ENCODE measurements at regions of chr19 and their contacts with region 1.

Region 1: DNA sequence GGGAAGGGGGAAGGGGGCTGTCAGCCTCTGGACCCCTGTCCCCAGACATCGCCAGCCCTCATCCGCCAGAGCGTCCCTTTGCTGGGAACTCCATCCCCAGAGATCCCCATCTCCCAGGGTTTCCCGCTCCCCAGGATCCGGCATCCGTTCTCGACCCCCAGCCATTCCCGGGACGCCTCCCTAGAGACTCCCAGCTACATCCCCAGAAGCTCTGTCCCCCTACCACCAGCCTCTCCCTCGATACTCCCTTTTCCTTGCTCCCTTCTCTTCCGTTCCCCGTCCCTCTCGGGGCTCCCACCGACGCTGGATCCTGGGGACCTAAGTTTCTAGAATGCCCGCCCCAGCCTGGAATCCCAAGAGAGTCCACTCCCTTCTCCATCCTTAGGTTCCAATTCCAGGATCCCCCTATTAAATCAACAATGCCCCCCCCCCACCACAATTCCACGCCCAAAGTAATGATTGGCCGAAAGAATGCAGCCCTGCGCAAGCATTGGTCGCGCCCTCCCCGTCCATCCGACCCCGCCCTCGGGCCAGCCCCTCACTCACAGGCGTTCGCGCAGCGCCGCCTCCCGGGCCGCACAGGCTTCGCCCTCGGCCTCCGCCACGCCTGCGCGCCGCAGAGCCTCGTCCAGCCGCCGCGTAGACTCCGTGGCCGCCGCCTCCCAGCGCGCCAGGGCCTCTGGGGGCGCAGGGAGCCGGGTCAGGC is 3.2 kb downstream of the CCDC194 start:
- DNase-seq: peak; percentile 89
- H3K4me3 ChIP-seq: peak overlapping the region; percentile 35
- H3K27ac ChIP-seq: no peak overlapping the region
- H3K4me1 ChIP-seq: peaks cover 6% of the 10 kb centered on the region
- H3K27me3 ChIP-seq: peaks cover 12% of the 10 kb centered on the region
- CTCF ChIP-seq: peak; percentile 61

Region 2: GRCh38 chr19:17292286-17293097 is 98.3 kb before region 1 on chr19:
- intact Hi-C with region 1: loop called (anchors 5 kb)
- DNase-seq: peak; percentile 87
- H3K4me3 ChIP-seq: peak overlapping the region; percentile 63
- H3K27ac ChIP-seq: peak overlapping the region; percentile 54
- H3K4me1 ChIP-seq: no peaks in the 10 kb centered on the region
- H3K27me3 ChIP-seq: no peaks in the 10 kb centered on the region
- CTCF ChIP-seq: peak; percentile 70

Region 3: DNA sequence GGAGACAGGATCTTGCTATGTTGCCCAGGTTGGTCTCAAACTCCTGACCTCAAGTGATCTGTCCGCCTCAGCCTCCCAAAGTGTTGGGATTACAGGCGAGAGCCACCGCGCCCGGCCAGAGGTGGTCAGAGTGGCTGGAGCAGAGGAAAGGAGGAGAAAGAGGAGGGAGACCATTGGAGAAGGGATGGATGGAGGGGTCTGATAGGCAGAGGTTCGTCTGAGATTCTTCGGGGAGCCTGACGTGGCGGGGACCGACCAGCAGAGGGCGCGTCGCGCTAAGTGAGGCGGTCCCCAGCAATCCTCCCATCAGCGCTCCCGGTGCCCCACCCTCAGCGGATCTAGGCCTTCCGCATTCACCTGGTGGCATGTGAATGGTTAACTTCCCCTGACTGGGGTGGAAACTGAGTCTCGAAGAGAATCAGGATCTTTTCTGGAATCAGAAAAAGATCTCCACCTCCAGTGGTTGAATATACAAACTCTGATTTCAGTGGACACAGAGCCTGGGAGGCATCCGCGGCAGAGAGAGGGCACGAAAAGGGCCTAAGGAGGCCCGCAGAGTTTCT is 44.6 kb before region 1 on chr19:
- intact Hi-C with region 1: loop called (anchors 2 kb)
- DNase-seq: peak; percentile 80
- H3K4me3 ChIP-seq: no peak overlapping the region
- H3K27ac ChIP-seq: no peak overlapping the region
- H3K4me1 ChIP-seq: no peaks in the 10 kb centered on the region
- H3K27me3 ChIP-seq: no peaks in the 10 kb centered on the region
- CTCF ChIP-seq: peak; percentile 95

Region 4: GRCh38 chr19:17703824-17704463 is 313.1 kb after region 1 on chr19:
- intact Hi-C with region 1: no loop called
- DNase-seq: peak; percentile 66
- H3K4me3 ChIP-seq: no peak overlapping the region
- H3K27ac ChIP-seq: no peak overlapping the region
- H3K4me1 ChIP-seq: no peaks in the 10 kb centered on the region
- H3K27me3 ChIP-seq: no peaks in the 10 kb centered on the region
- CTCF ChIP-seq: peak; percentile 87

Measured in colonic mucosa (tissue), 4 donors.